Mammary epithelial cell (primary cell): ENCODE measurements at regions of chr10 and their contacts with region 1.

Region 1: GRCh38 chr10:3757638-3758490 is 27.1 kb downstream of the KLF6 start:
- DNase-seq: peak; percentile 96
- H3K4me3 ChIP-seq: no peak overlapping the region
- H3K27ac ChIP-seq: peak overlapping the region; percentile 90
- H3K4me1 ChIP-seq: peaks cover 60% of the 10 kb centered on the region
- H3K27me3 ChIP-seq: no peaks in the 10 kb centered on the region
- CTCF ChIP-seq: no peak

Region 2: DNA sequence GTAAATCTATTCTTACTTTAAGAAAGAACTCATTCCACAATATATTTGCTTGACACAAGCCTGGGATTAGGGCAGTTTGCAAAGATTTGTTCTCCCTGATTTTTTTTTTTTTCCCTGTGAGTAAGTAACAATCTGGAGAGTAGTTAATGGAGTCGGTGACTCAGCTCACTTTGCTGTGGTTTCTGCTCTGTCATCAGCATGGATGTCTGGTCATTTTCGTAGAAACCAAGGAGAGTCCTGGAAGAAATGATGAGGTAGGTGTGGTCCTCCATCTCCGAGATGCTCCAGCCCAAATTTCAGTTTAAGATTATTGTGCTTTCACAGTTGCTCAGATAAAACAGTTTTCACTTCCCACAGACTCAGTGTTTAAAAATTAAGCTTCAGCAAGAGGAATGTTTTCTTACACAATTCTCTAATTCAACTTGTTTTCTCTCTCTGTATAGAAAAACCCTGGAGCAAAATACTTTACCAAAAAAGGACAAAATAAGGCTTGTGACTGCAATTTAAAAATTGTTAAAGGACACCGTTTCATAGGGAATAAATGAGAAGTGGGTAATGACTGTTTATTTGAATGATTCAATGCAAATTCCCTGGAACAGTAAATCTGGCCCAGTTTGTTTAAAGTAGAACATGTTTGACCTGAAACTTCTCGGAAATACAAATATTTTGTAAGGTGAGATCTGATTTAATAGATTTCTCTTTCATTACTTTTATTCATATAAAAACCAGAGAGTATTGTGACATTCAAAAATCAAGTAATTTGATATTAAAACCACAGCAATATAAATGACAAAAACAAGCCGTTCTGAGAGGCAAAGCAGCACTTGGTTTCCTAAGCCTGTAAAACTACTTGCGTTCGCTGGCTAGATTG is 508.7 kb before region 1 on chr10:
- CTCF ChIA-PET with region 1: no interaction called
- dilution Hi-C with region 1: loop called (anchors 5 kb)
- in situ Hi-C with region 1: loop called (anchors 10 kb)
- intact Hi-C with region 1: no loop called
- DNase-seq: peak; percentile 94
- H3K4me3 ChIP-seq: no peak overlapping the region
- H3K27ac ChIP-seq: peak overlapping the region; percentile 56
- H3K4me1 ChIP-seq: peaks cover 5% of the 10 kb centered on the region
- H3K27me3 ChIP-seq: no peaks in the 10 kb centered on the region
- CTCF ChIP-seq: no peak

Region 3: GRCh38 chr10:3636356-3637181 is 121.3 kb before region 1 on chr10:
- CTCF ChIA-PET with region 1: no interaction called
- dilution Hi-C with region 1: no loop called
- in situ Hi-C with region 1: loop called in 1 of 2 experiments (anchors 10 kb)
- intact Hi-C with region 1: no loop called
- DNase-seq: peak; percentile 44
- H3K4me3 ChIP-seq: no peak overlapping the region
- H3K27ac ChIP-seq: peak overlapping the region; percentile 50
- H3K4me1 ChIP-seq: peaks cover 28% of the 10 kb centered on the region
- H3K27me3 ChIP-seq: no peaks in the 10 kb centered on the region
- CTCF ChIP-seq: no peak

Region 4: DNA sequence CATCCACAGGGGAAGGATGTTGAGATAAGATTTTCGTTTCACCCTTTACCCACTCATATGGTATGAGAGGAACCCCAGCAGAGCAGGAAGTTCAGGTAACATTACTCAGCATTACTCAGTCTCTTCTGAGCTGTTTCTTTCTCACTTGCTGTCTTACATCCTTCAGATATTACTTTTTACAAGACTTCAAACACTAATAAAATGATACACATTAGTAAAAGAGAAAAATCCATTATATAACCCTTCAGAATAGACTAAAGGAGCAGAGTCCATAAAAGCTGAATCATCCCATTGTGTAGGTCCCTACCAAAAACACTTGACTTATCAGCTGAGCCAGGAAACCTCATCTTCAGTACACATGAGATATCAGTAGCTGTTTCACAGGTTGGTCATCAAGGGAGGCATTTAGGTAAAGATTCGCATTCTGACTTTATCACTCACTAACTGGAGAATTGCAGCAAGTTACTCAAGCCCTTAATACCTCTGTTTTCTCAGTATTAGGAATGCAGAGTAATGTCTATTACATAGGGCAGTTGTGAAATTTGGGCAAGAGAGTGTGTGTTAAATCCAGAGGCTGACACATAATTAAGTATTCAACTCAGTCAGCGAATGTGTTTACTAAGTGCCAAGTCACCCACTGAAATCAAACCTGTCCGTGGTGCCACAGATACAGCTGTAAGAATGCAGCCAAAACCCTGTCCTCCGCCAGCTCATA is 17.6 kb before region 1 on chr10:
- CTCF ChIA-PET with region 1: interaction called, 4 read pairs
- dilution Hi-C with region 1: no loop called
- in situ Hi-C with region 1: no loop called
- intact Hi-C with region 1: loop called (anchors 1 kb)
- DNase-seq: peak; percentile 95
- H3K4me3 ChIP-seq: no peak overlapping the region
- H3K27ac ChIP-seq: peak overlapping the region; percentile 81
- H3K4me1 ChIP-seq: peaks cover 22% of the 10 kb centered on the region
- H3K27me3 ChIP-seq: no peaks in the 10 kb centered on the region
- CTCF ChIP-seq: no peak